ENCODE measurements at regions of chr20 and their contacts with region 1.

Region 1: GRCh38 chr20:44187051-44187762 is at the start of gene JPH2:
- DNase-seq: peak; percentile 82 to 87
- H3K4me3 ChIP-seq: peak within 1 kb of the TSS; percentile 38
- H3K4me3 Mint-ChIP-seq: peak within 1 kb of the TSS; percentile 74
- H3K27ac Mint-ChIP-seq: peak within 1 kb of the TSS; percentile 13
- H3K4me1 ChIP-seq: peaks cover 45% of the 10 kb centered on the region
- H3K4me1 Mint-ChIP-seq: peaks cover 27% of the 10 kb centered on the region
- H3K27me3 ChIP-seq: no peaks in the 10 kb centered on the region
- H3K27me3 Mint-ChIP-seq: no peaks in the 10 kb centered on the region
- CTCF ChIP-seq: no peak
- total RNA-seq, gene JPH2: 10.5 and 11.1 TPM in 2 replicates

Region 2: GRCh38 chr20:44056010-44056698 is 131.1 kb before region 1 on chr20:
- CTCF ChIA-PET with region 1: interaction called, 9 read pairs
- POLR2A ChIA-PET with region 1: no interaction called
- intact Hi-C with region 1: loop called (anchors 2 kb)
- DNase-seq: peak; percentile 74 to 80
- H3K4me3 ChIP-seq: no peak overlapping the region
- H3K4me3 Mint-ChIP-seq: no peak overlapping the region
- H3K27ac Mint-ChIP-seq: no peak overlapping the region
- H3K4me1 ChIP-seq: no peaks in the 10 kb centered on the region
- H3K4me1 Mint-ChIP-seq: no peaks in the 10 kb centered on the region
- H3K27me3 ChIP-seq: no peaks in the 10 kb centered on the region
- H3K27me3 Mint-ChIP-seq: peaks cover 24% of the 10 kb centered on the region
- CTCF ChIP-seq: peak; percentile 91 to 94

Region 3: GRCh38 chr20:44123251-44123650 is 64.0 kb before region 1 on chr20:
- CTCF ChIA-PET with region 1: interaction called, 439 read pairs
- POLR2A ChIA-PET with region 1: interaction called, 13 read pairs
- intact Hi-C with region 1: no loop called
- DNase-seq: peak in 1 of 2 experiments; percentile 41
- H3K4me3 ChIP-seq: no peak overlapping the region
- H3K4me3 Mint-ChIP-seq: no peak overlapping the region
- H3K27ac Mint-ChIP-seq: no peak overlapping the region
- H3K4me1 ChIP-seq: no peaks in the 10 kb centered on the region
- H3K4me1 Mint-ChIP-seq: no peaks in the 10 kb centered on the region
- H3K27me3 ChIP-seq: no peaks in the 10 kb centered on the region
- H3K27me3 Mint-ChIP-seq: no peaks in the 10 kb centered on the region
- CTCF ChIP-seq: no peak

Region 4: DNA sequence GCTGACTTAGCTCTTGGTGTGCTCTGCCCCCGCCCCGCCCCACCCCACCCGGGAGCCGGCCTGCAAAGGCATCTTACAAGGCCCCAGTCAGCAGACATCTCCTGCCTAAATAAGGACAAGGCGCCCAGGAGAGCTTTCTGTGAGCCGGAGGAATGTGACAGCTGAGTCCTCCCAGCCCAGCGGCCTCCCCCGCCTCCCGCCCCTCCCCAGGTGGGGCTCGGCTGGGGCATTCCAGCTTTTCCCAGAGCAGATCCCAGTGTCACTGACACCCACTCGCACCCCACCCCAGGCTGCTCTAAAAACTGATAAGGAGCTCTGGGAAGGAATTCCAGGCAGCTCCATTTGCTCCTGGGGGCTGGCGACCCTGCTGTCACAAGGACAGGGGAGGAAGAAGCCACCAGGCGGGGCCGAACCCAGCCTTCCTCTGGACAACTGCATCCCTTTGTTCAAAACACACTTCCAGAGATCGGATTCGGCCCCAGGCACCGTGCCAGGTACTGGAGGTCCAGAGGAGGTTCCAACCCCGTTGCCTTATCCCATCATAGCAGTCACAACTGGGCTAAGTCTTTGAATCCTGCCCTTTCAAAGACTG is 49.9 kb before region 1 on chr20:
- CTCF ChIA-PET with region 1: interaction called, 52 read pairs
- POLR2A ChIA-PET with region 1: interaction called, 20 read pairs
- intact Hi-C with region 1: loop called (anchors 1 kb)
- DNase-seq: peak; percentile 92 to 98
- H3K4me3 ChIP-seq: no peak overlapping the region
- H3K4me3 Mint-ChIP-seq: peak overlapping the region; percentile 55
- H3K27ac Mint-ChIP-seq: peak overlapping the region; percentile 82
- H3K4me1 ChIP-seq: peaks cover 47% of the 10 kb centered on the region
- H3K4me1 Mint-ChIP-seq: peaks cover 39% of the 10 kb centered on the region
- H3K27me3 ChIP-seq: no peaks in the 10 kb centered on the region
- H3K27me3 Mint-ChIP-seq: no peaks in the 10 kb centered on the region
- CTCF ChIP-seq: peak in 1 of 2 experiments; percentile 13

Region 5: GRCh38 chr20:44166477-44166876 is 20.7 kb before region 1 on chr20:
- CTCF ChIA-PET with region 1: interaction called, 25 read pairs
- POLR2A ChIA-PET with region 1: no interaction called
- intact Hi-C with region 1: no loop called
- DNase-seq: no peak
- H3K4me3 ChIP-seq: no peak overlapping the region
- H3K4me3 Mint-ChIP-seq: no peak overlapping the region
- H3K27ac Mint-ChIP-seq: no peak overlapping the region
- H3K4me1 ChIP-seq: 0 out of 2 replicates have a peak, but pooled peaks cover 11% of the 10 kb centered on the region
- H3K4me1 Mint-ChIP-seq: peaks cover 10% of the 10 kb centered on the region
- H3K27me3 ChIP-seq: no peaks in the 10 kb centered on the region
- H3K27me3 Mint-ChIP-seq: no peaks in the 10 kb centered on the region
- CTCF ChIP-seq: no peak

Region 6: DNA sequence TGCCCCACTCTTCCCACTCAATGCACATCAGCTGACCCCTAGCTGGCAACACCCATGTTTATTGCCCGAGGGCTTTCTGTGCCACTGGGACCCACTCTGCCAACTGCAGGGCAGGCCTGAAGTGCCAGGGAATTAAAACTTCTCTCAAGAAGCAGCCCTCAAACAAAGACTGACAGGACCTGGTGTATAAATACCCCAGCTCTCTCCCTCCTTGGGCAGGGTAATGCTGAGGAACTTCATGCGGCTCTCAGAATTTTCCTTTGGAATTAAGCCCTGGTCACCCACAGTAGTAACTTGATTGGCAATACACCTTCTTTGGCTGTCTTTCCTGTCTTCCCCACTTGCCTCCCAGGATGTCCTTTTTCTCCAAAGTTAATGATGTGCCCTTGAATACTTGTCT is 54.6 kb after region 1 on chr20:
- CTCF ChIA-PET with region 1: no interaction called
- POLR2A ChIA-PET with region 1: no interaction called
- intact Hi-C with region 1: no loop called
- DNase-seq: no peak
- H3K4me3 ChIP-seq: no peak overlapping the region
- H3K4me3 Mint-ChIP-seq: no peak overlapping the region
- H3K27ac Mint-ChIP-seq: no peak overlapping the region
- H3K4me1 ChIP-seq: no peaks in the 10 kb centered on the region
- H3K4me1 Mint-ChIP-seq: no peaks in the 10 kb centered on the region
- H3K27me3 ChIP-seq: peaks cover 2% of the 10 kb centered on the region; the same call in 1 of the 2 replicates
- H3K27me3 Mint-ChIP-seq: peaks cover 8% of the 10 kb centered on the region
- CTCF ChIP-seq: no peak

Measured in Caco-2 (cell line).